WTC11 (cell line): ENCODE measurements at regions of chr20 and their contacts with region 1.

Region 1: GRCh38 chr20:51800060-51800794 is 2.1 kb downstream of the SALL4 start:
- DNase-seq: peak; percentile 98
- ATAC-seq: peak; percentile 73
- H3K4me3 Mint-ChIP-seq: peak overlapping the region; percentile 95
- H3K27ac Mint-ChIP-seq: peak overlapping the region; percentile 97
- H3K4me1 Mint-ChIP-seq: peaks cover 50% of the 10 kb centered on the region
- H3K27me3 Mint-ChIP-seq: no peaks in the 10 kb centered on the region
- CTCF ChIP-seq: peak; percentile 84

Region 2: DNA sequence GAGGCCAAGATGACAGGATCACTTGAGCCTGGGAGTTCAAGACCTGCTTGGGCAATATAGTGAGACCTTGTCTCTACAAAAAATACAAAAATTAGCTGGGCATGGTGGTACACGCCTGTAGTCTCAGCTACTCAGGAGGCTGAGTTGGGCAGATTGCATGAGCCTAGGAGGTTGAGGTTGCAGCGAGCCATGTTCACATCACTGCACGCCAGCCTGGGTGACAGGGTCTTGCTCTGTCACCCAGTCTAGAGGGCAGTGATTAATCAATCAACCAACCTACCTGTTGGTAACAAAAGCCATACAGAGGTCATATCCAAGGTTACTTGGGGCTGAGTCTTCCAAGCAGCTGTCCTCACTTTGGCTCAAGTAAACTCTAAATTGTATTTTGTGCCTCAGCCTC is 24.0 kb before region 1 on chr20:
- CTCF ChIA-PET with region 1: interaction called, 10 read pairs
- POLR2A ChIA-PET with region 1: no interaction called
- DNase-seq: no peak
- ATAC-seq: no peak
- H3K4me3 Mint-ChIP-seq: no peak overlapping the region
- H3K27ac Mint-ChIP-seq: peak overlapping the region; percentile 33
- H3K4me1 Mint-ChIP-seq: peaks cover 6% of the 10 kb centered on the region; the same call in 1 of the 2 replicates
- H3K27me3 Mint-ChIP-seq: no peaks in the 10 kb centered on the region
- CTCF ChIP-seq: no peak

Region 3: GRCh38 chr20:51854908-51855307 is 54.7 kb after region 1 on chr20:
- CTCF ChIA-PET with region 1: no interaction called
- POLR2A ChIA-PET with region 1: no interaction called
- DNase-seq: no peak
- ATAC-seq: no peak
- H3K4me3 Mint-ChIP-seq: no peak overlapping the region
- H3K27ac Mint-ChIP-seq: no peak overlapping the region
- H3K4me1 Mint-ChIP-seq: no peaks in the 10 kb centered on the region
- H3K27me3 Mint-ChIP-seq: no peaks in the 10 kb centered on the region
- CTCF ChIP-seq: no peak

Region 4: GRCh38 chr20:51966291-51966971 is 166.2 kb after region 1 on chr20:
- CTCF ChIA-PET with region 1: interaction called, 42 read pairs
- POLR2A ChIA-PET with region 1: interaction called, 6 read pairs
- DNase-seq: peak; percentile 71
- ATAC-seq: peak; percentile 96
- H3K4me3 Mint-ChIP-seq: no peak overlapping the region
- H3K27ac Mint-ChIP-seq: no peak overlapping the region
- H3K4me1 Mint-ChIP-seq: peaks cover 25% of the 10 kb centered on the region
- H3K27me3 Mint-ChIP-seq: no peaks in the 10 kb centered on the region
- CTCF ChIP-seq: peak; percentile 58

Region 5: DNA sequence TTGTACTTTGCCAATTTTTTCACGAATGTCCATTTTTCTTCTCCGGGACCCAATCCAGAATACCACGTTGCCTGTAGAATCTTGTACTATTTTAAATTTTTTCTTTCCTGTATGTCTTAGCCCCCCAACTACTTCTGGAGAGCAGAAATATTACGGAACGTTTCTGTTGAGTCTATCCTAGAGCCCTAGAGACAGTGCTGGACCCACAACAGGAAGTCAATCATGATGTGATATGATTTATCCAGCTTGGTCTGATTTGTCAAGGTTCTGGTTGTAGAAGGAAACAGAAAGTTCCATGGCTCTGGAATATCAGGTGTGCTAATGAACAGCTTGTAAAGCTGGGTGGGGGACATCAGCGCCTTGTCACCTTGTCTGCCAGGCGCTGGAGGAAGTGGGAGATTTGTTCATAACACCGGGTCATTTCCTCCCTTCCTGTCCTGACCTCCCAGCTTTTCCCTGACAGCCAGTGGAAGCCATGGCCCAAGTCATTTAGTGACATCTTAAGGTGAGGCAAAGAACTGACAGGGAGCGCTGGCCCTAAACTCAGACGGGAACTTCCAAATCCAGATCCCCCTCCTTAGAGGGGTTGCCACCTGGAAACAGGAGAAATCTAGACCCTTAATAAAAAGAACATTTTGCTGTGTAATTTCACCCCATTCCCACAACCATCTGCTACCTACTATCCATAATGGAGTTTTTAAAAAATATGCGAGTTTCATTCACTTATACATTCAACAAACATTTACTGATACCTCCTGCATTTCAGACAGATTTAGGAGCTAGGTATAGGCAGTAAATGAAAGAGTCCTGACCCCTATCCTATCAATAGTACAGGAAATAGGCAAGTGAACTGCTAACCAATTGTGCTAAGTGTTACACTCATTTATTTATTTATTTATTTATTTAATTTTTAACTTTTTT is 260.8 kb after region 1 on chr20:
- CTCF ChIA-PET with region 1: interaction called, 44 read pairs
- POLR2A ChIA-PET with region 1: interaction called, 3 read pairs
- DNase-seq: peak; percentile 45
- ATAC-seq: peak; percentile 97
- H3K4me3 Mint-ChIP-seq: no peak overlapping the region
- H3K27ac Mint-ChIP-seq: peak overlapping the region; percentile 58
- H3K4me1 Mint-ChIP-seq: peaks cover 10% of the 10 kb centered on the region
- H3K27me3 Mint-ChIP-seq: no peaks in the 10 kb centered on the region; the same call in 1 of the 2 replicates
- CTCF ChIP-seq: no peak